ENCODE measurements at regions of chr12 and their contacts with region 1.

Region 1: GRCh38 chr12:4857472-4858291 is 52.0 kb upstream of the KCNA1 start:
- DNase-seq: peak; percentile 63
- ATAC-seq: peak; percentile 93
- H3K4me3 ChIP-seq: no peak overlapping the region
- H3K27ac ChIP-seq: no peak overlapping the region
- H3K4me1 ChIP-seq: no peaks in the 10 kb centered on the region
- H3K27me3 ChIP-seq: peaks cover 36% of the 10 kb centered on the region
- CTCF ChIP-seq: peak; percentile 89
- POLR2A ChIP-seq: no peak
- RAD21 ChIP-seq: peak; percentile 64

Region 2: GRCh38 chr12:4432878-4433739 is 424.6 kb before region 1 on chr12:
- CTCF ChIA-PET with region 1: no interaction called
- POLR2A ChIA-PET with region 1: no interaction called
- dilution Hi-C with region 1: no loop called
- in situ Hi-C with region 1: no loop called
- intact Hi-C with region 1: no loop called
- DNase-seq: no peak
- ATAC-seq: no peak
- H3K4me3 ChIP-seq: no peak overlapping the region
- H3K27ac ChIP-seq: no peak overlapping the region
- H3K4me1 ChIP-seq: no peaks in the 10 kb centered on the region
- H3K27me3 ChIP-seq: peaks cover 5% of the 10 kb centered on the region; the same call in 1 of the 2 replicates
- CTCF ChIP-seq: no peak
- POLR2A ChIP-seq: no peak
- RAD21 ChIP-seq: no peak

Region 3: GRCh38 chr12:4763549-4763948 is 94.1 kb before region 1 on chr12:
- CTCF ChIA-PET with region 1: no interaction called
- POLR2A ChIA-PET with region 1: no interaction called
- dilution Hi-C with region 1: no loop called
- in situ Hi-C with region 1: no loop called
- intact Hi-C with region 1: no loop called
- DNase-seq: peak; percentile 2
- ATAC-seq: no peak
- H3K4me3 ChIP-seq: no peak overlapping the region
- H3K27ac ChIP-seq: no peak overlapping the region
- H3K4me1 ChIP-seq: no peaks in the 10 kb centered on the region
- H3K27me3 ChIP-seq: peaks cover 3% of the 10 kb centered on the region
- CTCF ChIP-seq: 0 out of 2 replicates have a peak, but pooled peaks have one; percentile 12
- POLR2A ChIP-seq: no peak
- RAD21 ChIP-seq: no peak

Region 4: GRCh38 chr12:4787965-4788364 is 69.7 kb before region 1 on chr12:
- CTCF ChIA-PET with region 1: no interaction called
- POLR2A ChIA-PET with region 1: no interaction called
- dilution Hi-C with region 1: no loop called
- in situ Hi-C with region 1: no loop called
- intact Hi-C with region 1: no loop called
- DNase-seq: no peak
- ATAC-seq: no peak
- H3K4me3 ChIP-seq: no peak overlapping the region
- H3K27ac ChIP-seq: no peak overlapping the region
- H3K4me1 ChIP-seq: no peaks in the 10 kb centered on the region
- H3K27me3 ChIP-seq: no peaks in the 10 kb centered on the region
- CTCF ChIP-seq: no peak
- POLR2A ChIP-seq: no peak
- RAD21 ChIP-seq: no peak

Region 5: DNA sequence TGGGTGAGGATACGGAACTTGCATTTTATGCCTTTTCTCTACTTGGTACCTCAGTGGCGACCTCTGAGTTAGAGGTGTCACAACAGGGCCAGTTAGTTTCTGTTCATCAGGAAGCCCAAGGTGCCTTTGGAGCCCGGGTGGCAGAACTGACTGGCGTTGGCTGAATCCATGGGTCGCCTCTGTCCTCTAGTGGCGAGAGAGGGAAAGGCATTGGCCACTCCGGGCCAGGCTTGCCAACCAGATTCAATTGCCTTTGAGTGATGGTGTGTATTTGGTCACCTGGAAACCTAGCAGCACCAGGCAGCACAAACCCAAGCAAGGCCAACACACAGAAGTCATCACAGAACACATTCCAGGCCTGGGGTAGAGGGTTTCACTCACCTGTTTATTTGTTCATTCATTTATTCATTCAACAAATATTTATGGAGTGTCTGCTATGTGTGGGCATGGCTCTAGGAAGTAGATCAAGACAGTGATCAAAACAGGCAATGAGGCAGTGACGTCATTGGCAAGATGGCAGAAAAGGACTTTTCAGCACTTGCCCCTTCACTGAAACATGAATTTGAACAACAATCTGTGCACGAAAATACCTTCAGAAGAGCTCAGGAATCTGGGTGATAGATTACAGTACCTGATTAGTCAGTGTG is 145.5 kb after region 1 on chr12:
- CTCF ChIA-PET with region 1: interaction called, 6 read pairs
- POLR2A ChIA-PET with region 1: no interaction called
- dilution Hi-C with region 1: no loop called
- in situ Hi-C with region 1: loop called (anchors 5 kb)
- intact Hi-C with region 1: loop called (anchors 1 kb)
- DNase-seq: peak; percentile 50
- ATAC-seq: peak; percentile 98
- H3K4me3 ChIP-seq: no peak overlapping the region
- H3K27ac ChIP-seq: no peak overlapping the region
- H3K4me1 ChIP-seq: no peaks in the 10 kb centered on the region
- H3K27me3 ChIP-seq: peaks cover 13% of the 10 kb centered on the region
- CTCF ChIP-seq: peak; percentile 95
- POLR2A ChIP-seq: no peak
- RAD21 ChIP-seq: peak; percentile 95

Region 6: GRCh38 chr12:5078423-5078822 is 220.7 kb after region 1 on chr12:
- CTCF ChIA-PET with region 1: interaction called, 10 read pairs
- POLR2A ChIA-PET with region 1: no interaction called
- dilution Hi-C with region 1: no loop called
- in situ Hi-C with region 1: loop called (anchors 5 kb)
- intact Hi-C with region 1: no loop called
- DNase-seq: no peak
- ATAC-seq: no peak
- H3K4me3 ChIP-seq: no peak overlapping the region
- H3K27ac ChIP-seq: no peak overlapping the region
- H3K4me1 ChIP-seq: no peaks in the 10 kb centered on the region
- H3K27me3 ChIP-seq: peaks cover 3% of the 10 kb centered on the region; the same call in 1 of the 2 replicates
- CTCF ChIP-seq: no peak
- POLR2A ChIP-seq: no peak
- RAD21 ChIP-seq: no peak

Region 7: DNA sequence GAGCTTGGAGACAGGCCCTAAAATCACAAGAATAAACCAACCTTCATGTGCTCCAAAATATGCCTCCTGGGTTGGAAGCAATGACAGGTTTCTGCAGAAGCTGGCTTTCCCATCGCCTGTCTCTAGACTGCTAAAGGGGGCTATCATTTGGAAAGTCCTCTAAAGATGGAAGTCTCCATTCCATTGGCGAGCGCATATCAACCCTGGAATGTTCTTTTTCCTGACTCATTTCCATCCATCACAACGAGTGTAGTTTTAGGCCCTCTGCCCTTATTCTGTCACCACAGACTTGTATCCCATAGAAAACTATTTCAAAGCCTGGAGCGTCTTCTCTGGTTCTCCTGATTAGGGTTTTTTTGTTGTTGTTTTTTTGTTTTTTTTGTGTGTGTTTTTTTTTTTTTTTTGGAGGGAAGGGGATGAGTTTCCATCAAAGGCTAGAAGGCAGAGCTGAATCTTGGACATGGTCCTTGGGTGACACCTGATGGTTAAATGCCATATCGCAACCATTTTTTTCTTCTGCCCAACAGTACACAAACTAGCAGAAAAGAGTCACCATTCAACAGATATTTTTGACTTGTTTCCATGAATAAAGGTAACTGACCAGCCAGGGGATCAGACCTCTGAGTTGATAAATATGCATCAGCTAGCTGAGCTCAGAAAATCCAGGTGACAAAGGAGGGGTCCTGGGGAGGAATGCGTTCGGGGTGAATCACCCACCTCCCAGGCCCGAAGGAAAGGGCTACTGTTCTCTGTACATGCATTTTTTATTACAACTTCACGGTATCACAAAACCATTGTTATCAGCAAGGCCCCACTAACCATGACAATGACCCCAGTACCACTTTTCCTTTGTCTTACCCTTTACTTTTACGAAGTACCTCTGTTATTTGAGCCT is 226.5 kb after region 1 on chr12:
- CTCF ChIA-PET with region 1: interaction called, 10 read pairs
- POLR2A ChIA-PET with region 1: interaction called, 3 read pairs
- dilution Hi-C with region 1: no loop called
- in situ Hi-C with region 1: loop called (anchors 5 kb)
- intact Hi-C with region 1: loop called (anchors 1 kb)
- DNase-seq: peak; percentile 71
- ATAC-seq: peak; percentile 44
- H3K4me3 ChIP-seq: no peak overlapping the region
- H3K27ac ChIP-seq: no peak overlapping the region
- H3K4me1 ChIP-seq: peaks cover 20% of the 10 kb centered on the region
- H3K27me3 ChIP-seq: peaks cover 3% of the 10 kb centered on the region; the same call in 1 of the 2 replicates
- CTCF ChIP-seq: peak; percentile 79
- POLR2A ChIP-seq: no peak
- RAD21 ChIP-seq: peak; percentile 78

Region 8: DNA sequence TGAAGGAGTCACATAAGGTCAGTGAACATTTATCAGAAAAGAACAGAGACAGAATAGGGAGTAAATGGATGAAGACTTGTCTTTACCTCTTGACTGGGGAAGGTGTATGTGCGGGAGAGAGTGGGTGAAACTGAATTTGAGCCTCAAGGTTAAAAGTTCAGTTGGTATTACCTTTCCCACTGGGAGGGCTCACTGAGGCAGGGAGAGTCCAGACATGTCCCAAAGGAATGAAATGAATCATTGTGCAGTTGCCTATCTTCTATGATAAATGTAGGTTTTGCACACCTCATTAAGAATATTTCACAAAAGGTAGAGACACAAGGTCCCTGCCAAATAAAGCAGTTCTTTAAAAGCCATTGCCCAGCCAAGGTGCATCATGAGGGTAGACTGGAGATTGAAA is 291.2 kb after region 1 on chr12:
- CTCF ChIA-PET with region 1: no interaction called
- POLR2A ChIA-PET with region 1: no interaction called
- dilution Hi-C with region 1: no loop called
- in situ Hi-C with region 1: no loop called
- intact Hi-C with region 1: no loop called
- DNase-seq: no peak
- ATAC-seq: no peak
- H3K4me3 ChIP-seq: no peak overlapping the region
- H3K27ac ChIP-seq: no peak overlapping the region
- H3K4me1 ChIP-seq: no peaks in the 10 kb centered on the region
- H3K27me3 ChIP-seq: peaks cover 7% of the 10 kb centered on the region
- CTCF ChIP-seq: no peak
- POLR2A ChIP-seq: no peak
- RAD21 ChIP-seq: no peak

Region 9: GRCh38 chr12:5442251-5443006 is 584.7 kb after region 1 on chr12:
- CTCF ChIA-PET with region 1: no interaction called
- POLR2A ChIA-PET with region 1: no interaction called
- dilution Hi-C with region 1: no loop called
- in situ Hi-C with region 1: no loop called
- intact Hi-C with region 1: loop called (anchors 1 kb)
- DNase-seq: peak; percentile 73
- ATAC-seq: peak; percentile 78
- H3K4me3 ChIP-seq: no peak overlapping the region
- H3K27ac ChIP-seq: peak overlapping the region; percentile 30; the same call in 1 of the 2 replicates
- H3K4me1 ChIP-seq: peaks cover 30% of the 10 kb centered on the region
- H3K27me3 ChIP-seq: no peaks in the 10 kb centered on the region
- CTCF ChIP-seq: peak; percentile 77
- POLR2A ChIP-seq: no peak
- RAD21 ChIP-seq: peak; percentile 81

Region 10: GRCh38 chr12:5796171-5796958 is 938.7 kb after region 1 on chr12:
- CTCF ChIA-PET with region 1: no interaction called
- POLR2A ChIA-PET with region 1: no interaction called
- dilution Hi-C with region 1: no loop called
- in situ Hi-C with region 1: no loop called
- intact Hi-C with region 1: loop called (anchors 5 kb)
- DNase-seq: peak; percentile 30
- ATAC-seq: peak; percentile 86
- H3K4me3 ChIP-seq: no peak overlapping the region
- H3K27ac ChIP-seq: no peak overlapping the region
- H3K4me1 ChIP-seq: no peaks in the 10 kb centered on the region
- H3K27me3 ChIP-seq: peaks cover 35% of the 10 kb centered on the region
- CTCF ChIP-seq: peak; percentile 72
- POLR2A ChIP-seq: no peak
- RAD21 ChIP-seq: peak; percentile 91